ENCODE measurements at regions of chr19 and their contacts with region 1.

Region 1: DNA sequence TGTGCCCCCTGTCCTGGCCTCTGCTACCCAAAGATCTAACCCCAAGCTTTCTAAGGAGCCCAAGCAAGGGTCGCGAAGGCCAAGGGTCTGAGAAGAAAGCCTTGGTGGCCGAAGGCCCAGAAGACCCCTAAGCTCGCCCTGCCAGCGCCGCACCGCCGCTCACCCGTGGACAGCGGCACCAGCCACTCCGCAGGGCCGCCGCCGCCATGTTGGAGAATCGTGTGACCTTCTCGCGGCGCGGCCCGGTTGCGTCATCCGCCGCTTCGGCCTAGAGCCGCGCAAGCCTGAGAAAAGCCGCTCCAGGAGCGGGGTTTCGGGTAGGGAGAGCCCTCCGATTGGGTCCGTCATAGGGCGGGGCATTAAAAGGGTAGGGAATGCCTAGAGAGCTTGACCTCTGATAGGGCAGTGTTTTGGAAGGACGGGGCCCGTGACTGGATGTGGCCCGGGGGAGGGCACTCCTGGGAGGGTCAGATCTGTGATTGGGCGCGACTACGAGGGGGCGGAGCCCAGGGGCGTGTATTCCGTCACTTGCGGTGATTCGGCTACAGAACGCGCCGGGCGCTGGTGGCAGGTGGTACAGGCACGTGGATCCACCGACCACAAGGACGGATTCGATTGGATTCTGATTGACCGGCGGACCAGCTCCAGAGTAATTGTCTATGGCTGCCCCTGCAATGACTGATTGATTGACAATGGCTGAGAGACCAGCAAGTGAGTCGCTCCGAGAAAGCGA is at the start of gene TIMM44:
- DNase-seq: peak; percentile 98
- ATAC-seq: peak; percentile 99
- total RNA-seq, gene TIMM44: 111 TPM

Region 2: DNA sequence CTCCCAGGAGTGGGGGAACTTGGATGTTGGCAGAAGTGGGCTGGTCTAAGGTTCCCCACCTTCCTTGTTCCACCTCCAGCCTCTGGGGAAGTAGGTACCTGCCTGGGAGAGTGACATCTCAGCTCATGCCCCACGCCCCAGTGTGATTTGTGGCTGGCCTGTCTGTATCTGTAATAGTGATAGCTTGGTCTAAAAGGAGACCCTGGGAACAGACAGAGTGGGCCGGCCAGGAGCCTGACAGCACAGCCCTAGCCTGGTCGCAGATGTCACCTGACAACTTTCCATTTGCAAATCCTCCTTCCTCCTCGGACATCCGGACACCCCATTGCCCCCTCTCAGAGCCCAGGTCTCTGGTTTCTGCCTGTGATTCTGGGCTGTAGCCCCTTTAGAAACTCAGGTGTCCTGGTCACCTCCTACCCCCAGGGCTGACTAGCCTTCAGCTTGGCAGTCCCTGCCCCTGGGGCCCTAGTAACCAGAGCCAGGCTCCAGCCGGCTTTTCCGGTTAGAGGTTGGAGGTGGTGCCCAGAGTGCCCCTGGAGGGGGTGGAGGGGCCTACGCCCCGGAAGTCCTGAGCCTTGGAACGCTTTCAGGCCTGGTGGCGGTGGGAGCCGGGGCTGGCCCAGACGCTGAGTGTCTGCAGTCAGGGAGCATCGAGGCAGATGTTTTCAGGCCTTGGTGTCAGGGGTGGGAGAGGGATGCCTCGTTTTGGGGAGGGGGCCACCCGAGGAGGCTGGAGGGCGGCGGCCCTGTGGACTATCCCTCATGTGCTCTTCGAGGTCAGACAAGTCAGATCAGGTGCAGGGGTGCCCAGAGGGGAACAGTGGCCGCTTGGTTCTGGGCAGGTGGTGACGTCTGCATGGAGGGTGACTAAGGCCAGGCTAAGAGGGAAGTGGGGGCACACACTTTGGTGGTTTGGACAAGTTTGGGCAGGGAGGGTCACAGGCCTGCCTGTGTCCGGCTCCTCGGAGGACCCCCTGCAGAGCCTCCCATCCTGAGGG is 48.7 kb before region 1 on chr19:
- intact Hi-C with region 1: no loop called
- DNase-seq: peak; percentile 37
- ATAC-seq: no peak

Region 3: DNA sequence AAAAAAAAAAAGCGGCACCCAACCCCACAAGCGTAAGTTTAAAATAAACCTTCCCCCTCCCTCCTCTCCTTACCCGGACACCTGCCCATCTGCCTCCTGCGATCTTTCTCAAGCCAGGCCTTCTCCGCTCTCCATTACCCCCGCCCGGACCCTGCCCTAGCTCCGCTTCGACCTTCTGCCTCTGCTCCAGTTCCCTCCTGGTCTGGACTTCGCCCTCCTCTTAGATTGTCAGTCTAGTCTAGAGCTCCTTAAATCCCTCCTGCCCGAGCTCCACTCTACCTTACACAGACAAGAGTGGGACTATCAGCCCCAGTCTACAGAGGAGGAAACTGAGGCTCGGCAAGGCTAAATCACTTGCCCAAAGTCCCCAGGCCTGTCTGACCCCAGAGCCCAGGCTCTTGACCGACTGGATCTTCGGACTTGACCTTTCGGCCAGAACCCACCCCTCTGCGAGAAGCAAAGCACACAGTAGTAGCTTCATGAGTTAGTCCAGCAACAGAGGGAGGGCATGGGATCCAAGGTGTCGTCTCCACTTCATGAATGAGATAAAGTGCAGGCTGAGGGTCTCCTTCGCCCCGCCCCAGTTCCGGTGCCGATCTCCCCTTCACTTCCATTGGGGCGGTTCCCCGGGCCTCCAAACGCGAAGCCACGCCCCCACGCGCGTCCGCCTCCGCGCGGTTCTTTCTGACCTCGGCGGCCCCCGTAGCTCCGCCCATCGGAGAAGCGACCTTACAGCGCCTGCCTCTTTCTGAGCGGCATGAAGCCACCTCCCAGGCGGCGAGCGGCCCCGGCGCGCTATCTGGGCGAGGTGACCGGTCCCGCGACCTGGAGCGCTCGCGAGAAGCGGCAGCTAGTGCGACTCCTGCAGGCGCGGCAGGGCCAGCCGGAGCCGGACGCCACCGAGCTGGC is 23.7 kb before region 1 on chr19 and contains the start of gene SNAPC2:
- intact Hi-C with region 1: loop called (anchors 2 kb)
- DNase-seq: peak; percentile 99
- ATAC-seq: peak; percentile 72
- total RNA-seq, gene SNAPC2: 10.3 TPM

Region 4: GRCh38 chr19:8005534-8006256 is 62.1 kb after region 1 on chr19 and contains the start of gene ELAVL1:
- intact Hi-C with region 1: loop called (anchors 2 kb)
- DNase-seq: peak; percentile 94
- ATAC-seq: peak; percentile 94
- total RNA-seq, gene ELAVL1: 55.1 TPM

Region 5: DNA sequence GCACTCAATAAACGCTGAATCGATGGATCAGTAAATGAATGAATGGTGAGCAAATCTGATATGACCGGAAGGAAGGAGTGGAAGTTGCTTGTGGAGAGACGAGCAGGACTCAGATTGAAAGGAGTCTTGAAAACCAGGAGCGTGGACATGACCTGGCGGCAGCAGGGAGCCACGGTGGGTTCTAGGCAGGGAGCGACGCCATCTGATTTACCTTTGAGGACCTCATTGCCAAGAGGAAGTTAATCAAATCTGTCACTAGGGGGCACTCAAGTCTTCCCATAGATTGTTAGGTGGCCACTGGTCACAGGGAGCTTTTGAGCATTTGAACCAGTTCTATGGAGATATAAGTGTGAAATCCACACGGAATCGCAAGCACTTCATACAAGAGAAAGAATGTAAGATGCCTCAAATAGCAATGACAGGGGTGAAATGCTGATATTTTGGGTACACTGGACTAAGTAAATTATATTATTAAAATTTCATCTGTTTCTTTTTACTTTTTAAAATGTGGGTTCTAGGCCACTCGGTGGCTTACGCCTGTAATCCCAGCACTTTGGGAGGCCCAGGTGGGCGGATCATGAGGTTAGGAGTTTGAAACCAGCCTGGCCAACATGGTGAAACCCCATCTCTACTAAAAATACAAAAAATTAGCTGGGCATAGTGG is 214.9 kb after region 1 on chr19:
- intact Hi-C with region 1: loop called (anchors 5 kb)
- DNase-seq: no peak
- ATAC-seq: peak; percentile 56

Measured in Right ventricle myocardium inferior (tissue), 1 donor.